ENCODE measurements at regions of chr16 and their contacts with region 1.

Region 1: GRCh38 chr16:16052916-16053315 is 103.5 kb downstream of the ABCC1 start:
- DNase-seq: no peak
- H3K4me3 ChIP-seq: no peak overlapping the region
- H3K27ac ChIP-seq: no peak overlapping the region
- H3K4me1 ChIP-seq: no peaks in the 10 kb centered on the region
- H3K27me3 ChIP-seq: no peaks in the 10 kb centered on the region
- CTCF ChIP-seq: no peak

Region 2: GRCh38 chr16:15660203-15660601 is 392.7 kb before region 1 on chr16:
- CTCF ChIA-PET with region 1: no interaction called
- dilution Hi-C with region 1: no loop called
- in situ Hi-C with region 1: no loop called
- intact Hi-C with region 1: no loop called
- DNase-seq: no peak
- H3K4me3 ChIP-seq: no peak overlapping the region
- H3K27ac ChIP-seq: no peak overlapping the region
- H3K4me1 ChIP-seq: no peaks in the 10 kb centered on the region
- H3K27me3 ChIP-seq: no peaks in the 10 kb centered on the region
- CTCF ChIP-seq: no peak

Region 3: DNA sequence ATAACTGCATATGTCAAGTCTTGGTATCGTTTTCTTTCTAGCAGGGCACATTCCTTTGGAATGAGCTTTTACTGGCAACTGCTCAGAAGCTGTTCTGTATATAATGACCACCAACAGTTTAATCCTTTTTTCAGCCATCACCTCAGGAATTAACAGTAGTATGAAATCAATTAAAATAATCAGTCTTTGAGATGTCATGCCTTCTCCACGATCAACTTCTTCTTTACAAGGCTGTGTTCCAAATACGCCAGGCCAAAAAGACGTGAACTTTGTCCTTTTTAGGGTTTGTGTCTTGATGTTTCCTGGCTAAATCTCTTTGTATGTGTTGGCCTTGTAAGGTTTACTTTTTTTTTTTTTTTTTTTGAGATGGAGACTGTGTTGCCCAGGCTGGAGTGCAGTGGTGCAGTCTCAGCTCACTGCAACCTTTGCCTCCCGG is 48.6 kb before region 1 on chr16:
- CTCF ChIA-PET with region 1: interaction called, 3 read pairs
- dilution Hi-C with region 1: loop called (anchors 5 kb)
- in situ Hi-C with region 1: no loop called
- intact Hi-C with region 1: no loop called
- DNase-seq: no peak
- H3K4me3 ChIP-seq: no peak overlapping the region
- H3K27ac ChIP-seq: no peak overlapping the region
- H3K4me1 ChIP-seq: no peaks in the 10 kb centered on the region
- H3K27me3 ChIP-seq: no peaks in the 10 kb centered on the region
- CTCF ChIP-seq: no peak

Region 4: GRCh38 chr16:16073891-16074881 is 21.3 kb after region 1 on chr16:
- CTCF ChIA-PET with region 1: no interaction called
- dilution Hi-C with region 1: no loop called
- in situ Hi-C with region 1: no loop called
- intact Hi-C with region 1: no loop called
- DNase-seq: no peak
- H3K4me3 ChIP-seq: no peak overlapping the region
- H3K27ac ChIP-seq: no peak overlapping the region
- H3K4me1 ChIP-seq: peaks cover 2% of the 10 kb centered on the region
- H3K27me3 ChIP-seq: no peaks in the 10 kb centered on the region
- CTCF ChIP-seq: no peak

Region 5: DNA sequence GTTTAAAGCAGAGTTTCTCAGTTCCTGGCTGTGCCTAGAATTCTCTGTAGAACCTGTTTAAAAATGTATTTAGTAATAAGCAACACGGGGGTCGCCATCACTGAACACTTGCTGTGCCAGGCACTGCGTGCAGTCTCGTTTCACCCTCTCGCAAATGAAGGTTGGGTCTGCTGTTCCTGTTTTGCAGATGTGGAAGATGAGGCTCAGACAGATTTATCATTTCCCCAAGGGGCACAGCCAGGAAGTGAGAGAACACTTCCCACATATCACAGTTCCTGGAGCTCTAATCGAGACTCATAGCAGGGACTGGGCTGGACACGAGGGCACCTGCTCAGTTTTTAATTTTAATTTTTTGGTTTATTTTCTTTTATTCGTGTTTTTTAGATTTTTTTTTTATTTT is 47.7 kb after region 1 on chr16:
- CTCF ChIA-PET with region 1: no interaction called
- dilution Hi-C with region 1: loop called (anchors 10 kb)
- in situ Hi-C with region 1: no loop called
- intact Hi-C with region 1: loop called (anchors 10 kb)
- DNase-seq: no peak
- H3K4me3 ChIP-seq: no peak overlapping the region
- H3K27ac ChIP-seq: no peak overlapping the region
- H3K4me1 ChIP-seq: no peaks in the 10 kb centered on the region
- H3K27me3 ChIP-seq: no peaks in the 10 kb centered on the region
- CTCF ChIP-seq: no peak

Measured in mammary epithelial cell (primary cell).